CD4-positive, alpha-beta memory T cell (primary cell): ENCODE measurements at regions of chr17 and their contacts with region 1.

Region 1: DNA sequence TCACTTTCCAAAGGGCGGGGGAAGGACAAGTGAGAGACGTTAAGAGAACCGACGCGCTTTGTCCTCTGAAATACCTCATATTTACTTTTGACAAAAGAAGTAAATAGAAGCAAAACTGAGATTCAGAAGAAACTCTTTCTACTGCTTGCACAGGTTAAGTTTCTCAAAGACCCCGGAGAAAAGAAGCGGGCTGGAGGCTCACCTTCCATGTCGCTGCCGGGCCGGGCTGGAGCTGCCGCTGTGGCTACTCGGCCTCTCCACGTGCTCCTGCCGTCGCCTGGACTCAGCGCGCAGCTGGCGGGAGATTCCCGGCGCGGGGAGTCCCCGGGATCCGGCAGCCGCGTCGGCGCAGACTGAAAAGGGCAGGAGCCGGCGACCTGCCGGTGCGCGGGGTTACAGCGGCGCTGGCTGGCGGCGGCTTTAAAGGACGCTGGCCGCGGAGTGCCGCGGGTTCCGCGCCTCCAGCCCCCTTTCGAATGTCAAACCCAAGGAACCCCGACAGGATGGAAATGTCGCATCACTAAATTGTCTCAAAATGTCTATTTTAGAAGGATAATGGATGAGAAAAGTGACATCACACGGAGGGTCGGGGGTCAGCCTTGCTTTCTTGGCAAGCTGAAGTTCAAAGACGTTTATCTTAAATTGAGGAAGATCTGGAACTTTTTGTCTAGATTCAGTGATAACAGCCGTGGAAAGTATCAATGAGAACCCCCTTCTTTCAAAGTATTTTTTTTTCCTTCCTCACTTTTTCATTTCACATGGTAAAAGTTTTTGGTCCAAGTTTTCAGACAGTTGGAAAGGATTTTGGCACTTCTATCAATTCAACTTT is at the start of gene IKZF3:
- DNase-seq: peak; percentile 82 to 90 (median 83)
- H3K4me3 ChIP-seq: peak within 1 kb of the TSS; percentile 55 to 80
- H3K4me3 Mint-ChIP-seq: peak within 1 kb of the TSS; percentile 91 to 97 (median 94)
- H3K27ac ChIP-seq: peak within 1 kb of the TSS; percentile 93
- H3K27ac Mint-ChIP-seq: peak within 1 kb of the TSS; percentile 94 to 99 (median 96)
- H3K4me1 ChIP-seq: peaks cover 68% of the 10 kb centered on the region
- H3K4me1 Mint-ChIP-seq: peaks cover 52 to 93% (median 67%) of the 10 kb centered on the region in 4 donors
- H3K27me3 ChIP-seq: no peaks in the 10 kb centered on the region
- H3K27me3 Mint-ChIP-seq: no peaks in the 10 kb centered on the region
- total RNA-seq, gene IKZF3: 116 to 118 TPM

Region 2: DNA sequence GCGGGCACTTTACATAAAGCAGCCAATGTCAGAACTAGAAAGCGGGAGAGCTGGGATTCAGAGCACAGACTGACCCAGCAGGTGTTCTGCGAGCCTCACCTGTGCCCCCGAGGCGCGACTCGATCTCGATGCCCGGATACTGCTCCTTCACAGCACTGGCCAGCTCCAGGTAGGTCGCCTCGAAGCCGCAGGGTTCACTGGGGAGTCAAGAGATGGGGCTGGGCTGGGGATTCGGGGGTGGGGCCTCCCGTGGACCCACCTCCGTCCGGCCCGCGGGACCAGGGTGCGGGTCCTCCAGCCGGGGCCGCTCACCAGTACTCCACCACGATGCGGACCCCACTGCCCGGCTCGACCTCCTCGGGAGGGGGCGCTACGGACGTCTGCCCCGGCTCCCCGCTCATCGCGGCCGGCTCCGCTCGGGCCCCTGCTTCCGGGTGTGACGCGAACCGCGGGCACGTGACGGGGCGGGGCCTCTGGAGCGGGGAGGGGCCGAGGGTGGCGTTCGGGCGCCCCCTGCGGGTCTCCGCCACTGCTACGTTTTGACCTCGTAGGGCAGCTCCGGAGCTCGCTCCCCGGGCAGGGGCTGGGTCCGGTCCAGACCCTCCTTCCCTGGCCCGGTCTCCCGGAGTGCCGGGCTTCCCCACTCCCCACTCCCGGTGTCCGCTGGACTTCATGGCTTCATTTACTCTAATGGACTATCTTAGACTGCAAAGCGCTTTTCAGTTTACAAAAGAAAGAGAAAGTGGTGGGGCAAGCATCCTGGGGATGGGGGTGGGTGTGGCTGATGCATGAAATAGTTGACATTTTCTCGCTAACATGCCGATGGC is 133.8 kb before region 1 on chr17 and contains the start of gene MIEN1:
- CTCF ChIA-PET with region 1: interaction called, 7 read pairs
- POLR2A ChIA-PET with region 1: interaction called, 19 read pairs
- intact Hi-C with region 1: loop called (anchors 1 kb)
- DNase-seq: peak; percentile 87 to 97 (median 93)
- H3K4me3 ChIP-seq: peak within 1 kb of the TSS; percentile 92 to 94
- H3K4me3 Mint-ChIP-seq: peak within 1 kb of the TSS; percentile 90 to 94 (median 92)
- H3K27ac ChIP-seq: peak within 1 kb of the TSS; percentile 91
- H3K27ac Mint-ChIP-seq: peak within 1 kb of the TSS; percentile 86 to 95 (median 93)
- H3K4me1 ChIP-seq: peaks cover 22% of the 10 kb centered on the region
- H3K4me1 Mint-ChIP-seq: peaks cover 6 to 33% (median 12%) of the 10 kb centered on the region in 4 donors
- H3K27me3 ChIP-seq: no peaks in the 10 kb centered on the region
- H3K27me3 Mint-ChIP-seq: no peaks in the 10 kb centered on the region
- total RNA-seq, gene MIEN1: 35.8 TPM

Region 3: GRCh38 chr17:39777534-39778365 is 86.4 kb before region 1 on chr17:
- CTCF ChIA-PET with region 1: interaction called, 16 read pairs
- POLR2A ChIA-PET with region 1: interaction called, 54 read pairs
- intact Hi-C with region 1: no loop called
- DNase-seq: peak in 4 of 5 donors; percentile 34 to 57 (median 48)
- H3K4me3 ChIP-seq: peak overlapping the region; percentile 64 to 74
- H3K4me3 Mint-ChIP-seq: peak overlapping the region; percentile 93 to 99 (median 96)
- H3K27ac ChIP-seq: peak overlapping the region; percentile 77
- H3K27ac Mint-ChIP-seq: peak overlapping the region; percentile 89 to 98 (median 95)
- H3K4me1 ChIP-seq: peaks cover 84% of the 10 kb centered on the region
- H3K4me1 Mint-ChIP-seq: peaks cover 51 to 88% (median 69%) of the 10 kb centered on the region in 4 donors
- H3K27me3 ChIP-seq: no peaks in the 10 kb centered on the region
- H3K27me3 Mint-ChIP-seq: no peaks in the 10 kb centered on the region

Region 4: DNA sequence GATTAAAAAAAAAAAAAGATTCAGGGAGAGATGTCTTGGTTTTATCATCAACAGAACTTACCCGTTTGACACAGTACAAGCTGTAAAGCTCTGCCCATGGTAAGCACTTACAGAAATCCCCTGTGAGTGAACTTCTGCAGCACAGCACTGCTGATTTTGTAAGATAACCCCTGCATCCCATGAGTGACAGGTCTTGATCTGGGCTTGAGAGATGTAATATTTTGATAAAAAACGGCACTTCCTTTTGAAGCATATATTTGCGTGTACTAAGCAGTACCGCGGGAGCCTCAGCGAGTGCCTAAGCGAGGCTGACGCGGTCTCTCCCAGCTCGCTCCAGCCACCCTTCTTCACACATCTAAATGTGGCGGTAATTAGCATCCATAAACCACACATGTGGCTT is 50.5 kb before region 1 on chr17:
- CTCF ChIA-PET with region 1: interaction called, 23 read pairs
- POLR2A ChIA-PET with region 1: interaction called, 31 read pairs
- intact Hi-C with region 1: no loop called
- DNase-seq: peak; percentile 75 to 91 (median 82)
- H3K4me3 ChIP-seq: peak overlapping the region in 1 of 2 donors; percentile 16
- H3K4me3 Mint-ChIP-seq: peak overlapping the region; percentile 69 to 92 (median 77)
- H3K27ac ChIP-seq: peak overlapping the region; percentile 67
- H3K27ac Mint-ChIP-seq: peak overlapping the region; percentile 91 to 98 (median 95)
- H3K4me1 ChIP-seq: peaks cover 74% of the 10 kb centered on the region
- H3K4me1 Mint-ChIP-seq: peaks cover 55 to 69% (median 61%) of the 10 kb centered on the region in 4 donors
- H3K27me3 ChIP-seq: no peaks in the 10 kb centered on the region
- H3K27me3 Mint-ChIP-seq: no peaks in the 10 kb centered on the region

Region 5: GRCh38 chr17:39927101-39927928 is 63.2 kb after region 1 on chr17 and contains the starts of genes LRRC3C and ORMDL3:
- CTCF ChIA-PET with region 1: interaction called, 9 read pairs
- POLR2A ChIA-PET with region 1: interaction called, 8 read pairs
- intact Hi-C with region 1: loop called (anchors 2 kb)
- DNase-seq: peak; percentile 87 to 92 (median 90)
- H3K4me3 ChIP-seq: peak within 1 kb of the TSS; percentile 79 to 89
- H3K4me3 Mint-ChIP-seq: peak within 1 kb of the TSS; percentile 83 to 99 (median 96)
- H3K27ac ChIP-seq: peak within 1 kb of the TSS; percentile 82
- H3K27ac Mint-ChIP-seq: peak within 1 kb of the TSS; percentile 93 to 99 (median 95)
- H3K4me1 ChIP-seq: peaks cover 50% of the 10 kb centered on the region
- H3K4me1 Mint-ChIP-seq: peaks cover 19 to 54% (median 41%) of the 10 kb centered on the region in 4 donors
- H3K27me3 ChIP-seq: no peaks in the 10 kb centered on the region
- H3K27me3 Mint-ChIP-seq: no peaks in the 10 kb centered on the region
- total RNA-seq, gene LRRC3C: not detected
- total RNA-seq, gene ORMDL3: 79.6 to 87.2 TPM